ENCODE measurements at regions of chr5 and their contacts with region 1.

Region 1: DNA sequence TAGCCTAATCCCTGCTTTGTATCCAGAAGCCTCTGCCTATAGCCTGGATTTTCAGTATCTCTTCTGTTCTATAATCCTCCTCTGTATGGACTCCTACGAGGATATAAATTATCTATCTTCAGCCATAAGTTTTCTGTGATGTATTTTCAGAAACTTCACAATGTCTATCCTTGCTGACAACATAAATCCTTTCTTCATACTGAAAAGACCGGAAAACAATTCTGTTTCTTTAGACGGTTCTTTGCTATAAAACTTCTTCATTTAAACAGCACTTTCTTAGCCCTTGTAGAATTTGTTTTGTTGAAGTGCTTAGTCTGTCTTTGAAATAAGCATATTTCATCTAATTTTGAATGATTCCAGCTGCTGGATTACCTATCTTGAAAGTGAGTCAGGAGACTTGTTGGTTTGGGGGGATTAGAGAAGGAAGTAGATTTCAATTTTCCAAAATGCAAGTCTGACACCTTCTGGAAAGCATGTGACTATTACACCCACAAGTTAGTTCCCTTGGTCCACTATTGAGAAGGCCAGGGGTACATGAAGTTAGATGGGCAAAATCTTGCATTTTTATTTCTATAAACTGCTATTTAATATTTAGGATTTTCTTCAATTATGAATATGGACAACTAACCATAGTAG is 96.3 kb upstream of the RANBP3L start:
- DNase-seq: no peak
- H3K4me3 Mint-ChIP-seq: no peak overlapping the region
- H3K27ac Mint-ChIP-seq: no peak overlapping the region
- H3K4me1 Mint-ChIP-seq: no peaks in the 10 kb centered on the region
- H3K27me3 Mint-ChIP-seq: no peaks in the 10 kb centered on the region
- CTCF ChIP-seq: no peak

Region 2: GRCh38 chr5:36177715-36178523 is 220.1 kb before region 1 on chr5:
- CTCF ChIA-PET with region 1: no interaction called
- intact Hi-C with region 1: loop called (anchors 5 kb)
- DNase-seq: no peak
- H3K4me3 Mint-ChIP-seq: no peak overlapping the region
- H3K27ac Mint-ChIP-seq: no peak overlapping the region
- H3K4me1 Mint-ChIP-seq: no peaks in the 10 kb centered on the region
- H3K27me3 Mint-ChIP-seq: no peaks in the 10 kb centered on the region
- CTCF ChIP-seq: peak; percentile 18

Region 3: GRCh38 chr5:36269479-36270219 is 128.4 kb before region 1 on chr5:
- CTCF ChIA-PET with region 1: no interaction called
- intact Hi-C with region 1: loop called (anchors 5 kb)
- DNase-seq: no peak
- H3K4me3 Mint-ChIP-seq: no peak overlapping the region
- H3K27ac Mint-ChIP-seq: no peak overlapping the region
- H3K4me1 Mint-ChIP-seq: no peaks in the 10 kb centered on the region
- H3K27me3 Mint-ChIP-seq: peaks cover 11% of the 10 kb centered on the region
- CTCF ChIP-seq: no peak

Region 4: GRCh38 chr5:36305571-36306326 is 92.3 kb before region 1 on chr5:
- CTCF ChIA-PET with region 1: no interaction called
- intact Hi-C with region 1: no loop called
- DNase-seq: peak; percentile 41
- H3K4me3 Mint-ChIP-seq: no peak overlapping the region
- H3K27ac Mint-ChIP-seq: no peak overlapping the region
- H3K4me1 Mint-ChIP-seq: peaks cover 6% of the 10 kb centered on the region
- H3K27me3 Mint-ChIP-seq: peaks cover 28% of the 10 kb centered on the region
- CTCF ChIP-seq: peak; percentile 54

Region 5: GRCh38 chr5:36728697-36729543 is 330.9 kb after region 1 on chr5:
- CTCF ChIA-PET with region 1: no interaction called
- intact Hi-C with region 1: no loop called
- DNase-seq: peak; percentile 19
- H3K4me3 Mint-ChIP-seq: no peak overlapping the region
- H3K27ac Mint-ChIP-seq: no peak overlapping the region
- H3K4me1 Mint-ChIP-seq: no peaks in the 10 kb centered on the region
- H3K27me3 Mint-ChIP-seq: peaks cover 13% of the 10 kb centered on the region
- CTCF ChIP-seq: peak; percentile 46

Measured in Calu3 (cell line).